GM12878 (cell line): ENCODE measurements at regions of chrX and their contacts with region 1.

Region 1: DNA sequence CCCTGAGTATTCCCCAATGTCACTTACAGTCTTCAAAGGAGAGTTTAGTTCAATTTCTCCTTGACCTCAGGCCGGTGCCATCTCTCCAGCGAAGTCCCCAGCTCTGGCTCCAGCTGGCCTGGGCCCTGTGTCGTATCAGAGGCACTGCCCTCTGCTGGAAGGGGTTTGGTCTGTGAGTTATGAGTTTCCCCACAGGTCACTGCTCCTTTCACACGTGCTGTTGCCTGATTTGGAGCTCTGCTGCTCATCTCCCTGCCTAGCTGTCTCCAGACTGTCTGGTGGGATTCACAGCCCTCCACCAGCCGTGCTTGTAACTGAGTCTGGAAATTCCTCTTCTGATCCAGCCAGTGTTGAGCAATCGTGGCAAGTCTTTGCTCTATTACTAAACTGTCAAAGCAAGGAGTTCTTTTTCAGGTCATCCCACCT is at the start of gene RAP2C:
- DNase-seq: no peak
- ATAC-seq: peak; percentile 73
- H3K4me3 ChIP-seq: peak within 1 kb of the TSS; percentile 74
- H3K27ac ChIP-seq: peak within 1 kb of the TSS; percentile 57; the same call in 1 of the 2 replicates
- H3K4me1 ChIP-seq: no peaks in the 10 kb centered on the region
- H3K27me3 ChIP-seq: no peaks in the 10 kb centered on the region
- CTCF ChIP-seq: peak; percentile 61 to 76 (median 75)
- EP300 ChIP-seq: no peak
- POLR2A ChIP-seq: peak; percentile 48
- RAD21 ChIP-seq: peak; percentile 58
- polyA plus RNA-seq, gene RAP2C: 20.3 to 27.4 TPM

Region 2: GRCh38 chrX:131830400-131831184 is 388.8 kb before region 1 on chrX:
- CTCF ChIA-PET with region 1: interaction called, 34 read pairs
- POLR2A ChIA-PET with region 1: interaction called, 8 read pairs
- RAD21 ChIA-PET with region 1: interaction called, 24 read pairs
- SMC1A ChIA-PET with region 1: interaction called, 15 read pairs
- in situ Hi-C with region 1: loop called (anchors 5 kb)
- intact Hi-C with region 1: loop called (anchors 1 kb)
- DNase-seq: peak; percentile 69
- ATAC-seq: peak; percentile 88
- H3K4me3 ChIP-seq: peak overlapping the region; percentile 62
- H3K27ac ChIP-seq: peak overlapping the region; percentile 48
- H3K4me1 ChIP-seq: peaks cover 4% of the 10 kb centered on the region; the same call in 1 of the 2 replicates
- H3K27me3 ChIP-seq: no peaks in the 10 kb centered on the region
- CTCF ChIP-seq: peak; percentile 28 to 57 (median 42); a peak in 4 of 6 replicates
- EP300 ChIP-seq: no peak
- POLR2A ChIP-seq: peak; percentile 67
- RAD21 ChIP-seq: peak; percentile 70

Region 3: GRCh38 chrX:131854581-131854980 is 364.8 kb before region 1 on chrX:
- CTCF ChIA-PET with region 1: interaction called, 25 read pairs
- POLR2A ChIA-PET with region 1: no interaction called
- RAD21 ChIA-PET with region 1: no interaction called
- SMC1A ChIA-PET with region 1: interaction called, 4 read pairs
- in situ Hi-C with region 1: loop called (anchors 10 kb)
- intact Hi-C with region 1: no loop called
- DNase-seq: no peak
- ATAC-seq: no peak
- H3K4me3 ChIP-seq: no peak overlapping the region
- H3K27ac ChIP-seq: no peak overlapping the region
- H3K4me1 ChIP-seq: no peaks in the 10 kb centered on the region
- H3K27me3 ChIP-seq: no peaks in the 10 kb centered on the region
- CTCF ChIP-seq: peak; percentile 6 to 31 (median 10); a peak in 2 of 6 replicates
- EP300 ChIP-seq: no peak
- POLR2A ChIP-seq: no peak
- RAD21 ChIP-seq: peak; percentile 51

Region 4: DNA sequence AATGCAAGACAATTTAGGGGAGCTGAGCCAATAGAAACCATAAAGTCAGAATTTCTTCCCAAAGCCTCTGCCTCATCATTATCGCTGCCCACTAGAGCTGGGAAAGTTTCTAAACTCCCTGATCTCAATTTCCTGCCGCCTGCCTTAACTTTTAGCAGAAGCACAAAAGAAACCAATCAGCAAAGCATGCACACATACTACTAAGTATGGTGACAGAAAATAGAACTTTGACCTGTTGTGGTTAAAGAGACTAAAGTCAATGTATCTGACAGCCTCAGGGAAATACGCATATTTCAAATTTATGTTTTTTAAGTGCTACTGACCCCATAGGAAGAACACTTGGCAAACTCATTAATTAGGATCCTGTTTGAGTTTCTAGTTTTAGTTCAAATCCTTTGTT is 186.2 kb before region 1 on chrX:
- CTCF ChIA-PET with region 1: interaction called, 3 read pairs
- POLR2A ChIA-PET with region 1: no interaction called
- RAD21 ChIA-PET with region 1: interaction called, 4 read pairs
- SMC1A ChIA-PET with region 1: interaction called, 4 read pairs
- in situ Hi-C with region 1: loop called (anchors 5 kb)
- intact Hi-C with region 1: no loop called
- DNase-seq: no peak
- ATAC-seq: peak; percentile 75
- H3K4me3 ChIP-seq: peak overlapping the region; percentile 56; the same call in 1 of the 2 replicates
- H3K27ac ChIP-seq: peak overlapping the region; percentile 36
- H3K4me1 ChIP-seq: no peaks in the 10 kb centered on the region; the same call in 1 of the 2 replicates
- H3K27me3 ChIP-seq: no peaks in the 10 kb centered on the region
- CTCF ChIP-seq: no peak
- EP300 ChIP-seq: no peak
- POLR2A ChIP-seq: no peak
- RAD21 ChIP-seq: no peak

Region 5: GRCh38 chrX:132101799-132102198 is 117.6 kb before region 1 on chrX:
- CTCF ChIA-PET with region 1: interaction called, 11 read pairs
- POLR2A ChIA-PET with region 1: interaction called, 3 read pairs
- RAD21 ChIA-PET with region 1: interaction called, 4 read pairs
- SMC1A ChIA-PET with region 1: no interaction called
- in situ Hi-C with region 1: no loop called
- intact Hi-C with region 1: no loop called
- DNase-seq: no peak
- ATAC-seq: peak; percentile 61
- H3K4me3 ChIP-seq: no peak overlapping the region
- H3K27ac ChIP-seq: no peak overlapping the region
- H3K4me1 ChIP-seq: no peaks in the 10 kb centered on the region
- H3K27me3 ChIP-seq: peaks cover 2 to 6% of the 10 kb centered on the region in 2 experiments; a peak in 2 of 4 replicates
- CTCF ChIP-seq: no peak
- EP300 ChIP-seq: no peak
- POLR2A ChIP-seq: no peak
- RAD21 ChIP-seq: no peak

Region 6: GRCh38 chrX:132488819-132489577 is 269.6 kb after region 1 on chrX and contains the start of gene MBNL3:
- CTCF ChIA-PET with region 1: interaction called, 4 read pairs
- POLR2A ChIA-PET with region 1: no interaction called
- RAD21 ChIA-PET with region 1: interaction called, 5 read pairs
- SMC1A ChIA-PET with region 1: no interaction called
- in situ Hi-C with region 1: no loop called
- intact Hi-C with region 1: loop called (anchors 5 kb)
- DNase-seq: no peak
- ATAC-seq: peak; percentile 79
- H3K4me3 ChIP-seq: peak within 1 kb of the TSS; percentile 72
- H3K27ac ChIP-seq: peak within 1 kb of the TSS; percentile 81
- H3K4me1 ChIP-seq: no peaks in the 10 kb centered on the region
- H3K27me3 ChIP-seq: no peaks in the 10 kb centered on the region
- CTCF ChIP-seq: no peak
- EP300 ChIP-seq: no peak
- POLR2A ChIP-seq: peak; percentile 72
- RAD21 ChIP-seq: no peak
- polyA plus RNA-seq, gene MBNL3: 3.4 to 6.1 TPM